ENCODE measurements at regions of chr12 and their contacts with region 1.

Region 1: GRCh38 chr12:79886917-79887519 is 47.9 kb downstream of the PPP1R12A start:
- DNase-seq: peak; percentile 50
- ATAC-seq: peak; percentile 53
- H3K4me3 ChIP-seq: no peak overlapping the region
- H3K4me3 Mint-ChIP-seq: no peak overlapping the region
- H3K27ac ChIP-seq: no peak overlapping the region
- H3K27ac Mint-ChIP-seq: no peak overlapping the region
- H3K4me1 ChIP-seq: peaks cover 3 to 14% of the 10 kb centered on the region in 2 donors
- H3K4me1 Mint-ChIP-seq: peaks cover 67% of the 10 kb centered on the region
- H3K27me3 ChIP-seq: no peaks in the 10 kb centered on the region
- H3K27me3 Mint-ChIP-seq: no peaks in the 10 kb centered on the region
- CTCF ChIP-seq: peak; percentile 76

Region 2: DNA sequence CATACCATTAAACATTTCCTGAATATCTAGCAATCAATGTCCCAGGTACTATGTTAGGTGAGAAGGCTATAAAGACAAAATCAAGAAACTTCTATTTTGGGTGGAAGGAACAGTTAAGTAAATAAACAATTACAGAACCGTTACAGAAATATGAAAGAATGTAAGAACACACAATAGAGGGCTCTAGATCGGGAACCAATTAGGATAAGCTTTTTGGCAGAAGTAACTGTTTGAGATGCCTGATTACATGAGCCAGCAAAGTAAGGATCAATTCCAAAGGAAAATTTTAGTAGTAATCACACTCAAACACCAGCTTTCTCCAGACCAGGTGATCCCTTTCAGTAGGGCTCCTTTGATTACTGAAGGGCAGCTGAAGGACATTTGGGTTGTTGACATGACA is 13.9 kb after region 1 on chr12:
- CTCF ChIA-PET with region 1: no interaction called
- POLR2A ChIA-PET with region 1: no interaction called
- intact Hi-C with region 1: loop called (anchors 2 kb)
- DNase-seq: no peak
- ATAC-seq: no peak
- H3K4me3 ChIP-seq: no peak overlapping the region
- H3K4me3 Mint-ChIP-seq: no peak overlapping the region
- H3K27ac ChIP-seq: no peak overlapping the region
- H3K27ac Mint-ChIP-seq: no peak overlapping the region
- H3K4me1 ChIP-seq: peaks cover 0 to 4% of the 10 kb centered on the region in 2 donors
- H3K4me1 Mint-ChIP-seq: peaks cover 62% of the 10 kb centered on the region
- H3K27me3 ChIP-seq: no peaks in the 10 kb centered on the region
- H3K27me3 Mint-ChIP-seq: no peaks in the 10 kb centered on the region
- CTCF ChIP-seq: no peak

Region 3: GRCh38 chr12:79935021-79935623 is 48.1 kb after region 1 on chr12 and contains the start of gene PPP1R12A:
- CTCF ChIA-PET with region 1: no interaction called
- POLR2A ChIA-PET with region 1: no interaction called
- intact Hi-C with region 1: loop called (anchors 5 kb)
- DNase-seq: peak; percentile 97
- ATAC-seq: peak; percentile 88
- H3K4me3 ChIP-seq: peak within 1 kb of the TSS; percentile 85 to 95 (median 92)
- H3K4me3 Mint-ChIP-seq: peak within 1 kb of the TSS; percentile 99
- H3K27ac ChIP-seq: peak within 1 kb of the TSS; percentile 92 to 93
- H3K27ac Mint-ChIP-seq: peak within 1 kb of the TSS; percentile 99
- H3K4me1 ChIP-seq: peaks cover 18 to 31% of the 10 kb centered on the region in 2 donors
- H3K4me1 Mint-ChIP-seq: peaks cover 43% of the 10 kb centered on the region
- H3K27me3 ChIP-seq: no peaks in the 10 kb centered on the region
- H3K27me3 Mint-ChIP-seq: no peaks in the 10 kb centered on the region
- CTCF ChIP-seq: no peak
- total RNA-seq, gene PPP1R12A: 110 and 139 TPM in 2 replicates

Region 4: DNA sequence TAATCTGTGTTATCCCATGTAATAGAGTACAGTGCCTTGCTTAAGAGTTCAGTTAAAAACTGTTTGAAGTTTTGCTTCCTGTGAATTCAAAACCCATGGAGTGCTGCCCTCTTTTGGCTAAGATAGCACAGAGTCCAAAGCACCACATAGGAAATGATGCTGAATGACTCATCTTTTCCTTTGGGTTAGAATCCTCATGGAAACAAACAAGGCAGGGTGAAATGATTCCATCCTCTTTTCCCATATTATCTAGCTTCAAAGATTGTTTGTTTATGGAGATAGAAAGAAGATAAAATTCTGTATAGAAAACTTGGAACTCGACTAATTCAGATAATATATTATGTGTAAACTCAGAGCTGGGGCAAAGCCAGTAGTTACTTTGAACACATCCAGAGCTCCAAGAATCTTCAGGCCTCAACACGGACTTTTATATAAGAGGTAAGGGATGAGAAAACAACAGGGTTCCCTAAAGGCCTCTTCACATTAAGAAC is 299.8 kb after region 1 on chr12:
- CTCF ChIA-PET with region 1: interaction called, 4 read pairs
- POLR2A ChIA-PET with region 1: no interaction called
- intact Hi-C with region 1: loop called (anchors 1 kb)
- DNase-seq: peak; percentile 32
- ATAC-seq: no peak
- H3K4me3 ChIP-seq: no peak overlapping the region
- H3K4me3 Mint-ChIP-seq: no peak overlapping the region
- H3K27ac ChIP-seq: no peak overlapping the region
- H3K27ac Mint-ChIP-seq: no peak overlapping the region
- H3K4me1 ChIP-seq: no peaks in the 10 kb centered on the region
- H3K4me1 Mint-ChIP-seq: no peaks in the 10 kb centered on the region
- H3K27me3 ChIP-seq: no peaks in the 10 kb centered on the region
- H3K27me3 Mint-ChIP-seq: peaks cover 5% of the 10 kb centered on the region
- CTCF ChIP-seq: peak; percentile 21

Region 5: GRCh38 chr12:80269803-80270552 is 383.0 kb after region 1 on chr12:
- CTCF ChIA-PET with region 1: interaction called, 5 read pairs
- POLR2A ChIA-PET with region 1: no interaction called
- intact Hi-C with region 1: loop called (anchors 5 kb)
- DNase-seq: peak; percentile 35
- ATAC-seq: no peak
- H3K4me3 ChIP-seq: no peak overlapping the region
- H3K4me3 Mint-ChIP-seq: no peak overlapping the region
- H3K27ac ChIP-seq: no peak overlapping the region
- H3K27ac Mint-ChIP-seq: no peak overlapping the region
- H3K4me1 ChIP-seq: no peaks in the 10 kb centered on the region
- H3K4me1 Mint-ChIP-seq: no peaks in the 10 kb centered on the region
- H3K27me3 ChIP-seq: no peaks in the 10 kb centered on the region
- H3K27me3 Mint-ChIP-seq: peaks cover 3% of the 10 kb centered on the region
- CTCF ChIP-seq: peak; percentile 79